GM12878 (cell line): ENCODE measurements at regions of chrX and their contacts with region 1.

Region 1: GRCh38 chrX:97326456-97326855 is 442.7 kb downstream of the RPA4 start:
- DNase-seq: peak; percentile 73
- ATAC-seq: peak; percentile 96
- H3K4me3 ChIP-seq: no peak overlapping the region
- H3K27ac ChIP-seq: no peak overlapping the region
- H3K4me1 ChIP-seq: no peaks in the 10 kb centered on the region
- H3K27me3 ChIP-seq: no peaks in the 10 kb centered on the region
- CTCF ChIP-seq: no peak
- EP300 ChIP-seq: no peak
- POLR2A ChIP-seq: no peak
- RAD21 ChIP-seq: no peak

Region 2: GRCh38 chrX:96906741-96907140 is 419.7 kb before region 1 on chrX:
- CTCF ChIA-PET with region 1: no interaction called
- POLR2A ChIA-PET with region 1: interaction called, 12 read pairs
- RAD21 ChIA-PET with region 1: no interaction called
- SMC1A ChIA-PET with region 1: no interaction called
- in situ Hi-C with region 1: no loop called
- intact Hi-C with region 1: no loop called
- DNase-seq: no peak
- ATAC-seq: no peak
- H3K4me3 ChIP-seq: no peak overlapping the region
- H3K27ac ChIP-seq: no peak overlapping the region
- H3K4me1 ChIP-seq: no peaks in the 10 kb centered on the region
- H3K27me3 ChIP-seq: no peaks in the 10 kb centered on the region
- CTCF ChIP-seq: no peak
- EP300 ChIP-seq: no peak
- POLR2A ChIP-seq: no peak
- RAD21 ChIP-seq: no peak

Region 3: GRCh38 chrX:97215186-97215585 is 111.3 kb before region 1 on chrX:
- CTCF ChIA-PET with region 1: no interaction called
- POLR2A ChIA-PET with region 1: no interaction called
- RAD21 ChIA-PET with region 1: no interaction called
- SMC1A ChIA-PET with region 1: no interaction called
- in situ Hi-C with region 1: no loop called
- intact Hi-C with region 1: no loop called
- DNase-seq: no peak
- ATAC-seq: no peak
- H3K4me3 ChIP-seq: no peak overlapping the region
- H3K27ac ChIP-seq: no peak overlapping the region
- H3K4me1 ChIP-seq: no peaks in the 10 kb centered on the region
- H3K27me3 ChIP-seq: no peaks in the 10 kb centered on the region
- CTCF ChIP-seq: no peak
- EP300 ChIP-seq: no peak
- POLR2A ChIP-seq: no peak
- RAD21 ChIP-seq: no peak

Region 4: GRCh38 chrX:97380200-97380599 is 53.7 kb after region 1 on chrX:
- CTCF ChIA-PET with region 1: no interaction called
- POLR2A ChIA-PET with region 1: no interaction called
- RAD21 ChIA-PET with region 1: no interaction called
- SMC1A ChIA-PET with region 1: no interaction called
- in situ Hi-C with region 1: no loop called
- intact Hi-C with region 1: no loop called
- DNase-seq: no peak
- ATAC-seq: no peak
- H3K4me3 ChIP-seq: no peak overlapping the region
- H3K27ac ChIP-seq: no peak overlapping the region
- H3K4me1 ChIP-seq: no peaks in the 10 kb centered on the region
- H3K27me3 ChIP-seq: no peaks in the 10 kb centered on the region
- CTCF ChIP-seq: no peak
- EP300 ChIP-seq: no peak
- POLR2A ChIP-seq: no peak
- RAD21 ChIP-seq: no peak

Region 5: DNA sequence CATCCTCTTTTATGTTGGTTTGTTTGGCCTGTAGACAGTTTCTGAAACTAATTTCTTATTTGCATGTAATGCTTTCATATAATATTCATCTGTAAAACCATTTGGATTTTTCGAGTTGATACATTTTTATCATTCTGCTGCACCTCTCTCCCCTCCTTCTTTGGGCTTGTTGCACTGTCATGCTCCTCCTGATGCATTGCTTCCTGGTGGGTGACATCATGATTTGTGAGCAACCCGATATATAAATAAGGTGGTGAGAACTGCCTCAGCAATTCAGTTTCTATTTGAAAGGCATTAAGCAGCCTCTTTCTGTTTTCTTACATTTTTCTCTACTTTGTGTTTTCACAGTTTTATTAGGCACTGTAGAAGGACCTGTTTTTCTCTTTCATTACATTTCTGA is 72.9 kb after region 1 on chrX:
- CTCF ChIA-PET with region 1: no interaction called
- POLR2A ChIA-PET with region 1: no interaction called
- RAD21 ChIA-PET with region 1: no interaction called
- SMC1A ChIA-PET with region 1: no interaction called
- in situ Hi-C with region 1: no loop called
- intact Hi-C with region 1: loop called (anchors 1 kb)
- DNase-seq: peak; percentile 44
- ATAC-seq: peak; percentile 63
- H3K4me3 ChIP-seq: no peak overlapping the region
- H3K27ac ChIP-seq: peak overlapping the region; percentile 33; the same call in 1 of the 2 replicates
- H3K4me1 ChIP-seq: peaks cover 23% of the 10 kb centered on the region
- H3K27me3 ChIP-seq: no peaks in the 10 kb centered on the region
- CTCF ChIP-seq: no peak
- EP300 ChIP-seq: no peak
- POLR2A ChIP-seq: no peak
- RAD21 ChIP-seq: no peak